HAP-1 (cell line): ENCODE measurements at regions of chrX and their contacts with region 1.

Region 1: GRCh38 chrX:111886678-111887077 is 10.7 kb downstream of the TRPC5OS start:
- DNase-seq: no peak
- H3K4me3 ChIP-seq: no peak overlapping the region
- H3K4me1 ChIP-seq: no peaks in the 10 kb centered on the region
- H3K27me3 ChIP-seq: no peaks in the 10 kb centered on the region

Region 2: DNA sequence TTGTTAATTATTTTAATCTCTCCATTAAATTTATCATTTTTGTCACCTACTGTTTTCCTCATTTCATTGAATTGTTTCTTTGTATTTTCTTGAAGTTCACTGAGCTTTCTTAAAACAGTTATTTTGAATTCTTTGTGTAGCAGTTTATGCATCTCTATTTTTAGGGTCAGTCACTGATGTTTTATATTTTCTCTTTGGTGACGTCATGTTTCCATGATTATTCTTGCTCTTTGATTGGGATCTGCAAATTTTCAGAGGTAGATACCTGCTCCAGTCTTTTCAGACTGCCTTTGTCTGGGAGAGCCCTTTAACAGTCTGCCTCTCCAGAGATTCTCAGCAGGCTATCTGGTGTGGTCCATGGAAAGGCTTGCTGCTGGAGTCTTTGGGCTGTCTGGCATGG is 221.5 kb after region 1 on chrX:
- in situ Hi-C with region 1: no loop called
- DNase-seq: no peak
- H3K4me3 ChIP-seq: no peak overlapping the region
- H3K4me1 ChIP-seq: no peaks in the 10 kb centered on the region
- H3K27me3 ChIP-seq: no peaks in the 10 kb centered on the region

Region 3: GRCh38 chrX:112642349-112642748 is 755.7 kb after region 1 on chrX:
- in situ Hi-C with region 1: loop called (anchors 25 kb)
- DNase-seq: peak; percentile 64 to 73
- H3K4me3 ChIP-seq: no peak overlapping the region
- H3K4me1 ChIP-seq: no peaks in the 10 kb centered on the region
- H3K27me3 ChIP-seq: no peaks in the 10 kb centered on the region